Heart left ventricle (tissue), 16 donors: ENCODE measurements at regions of chr5 and their contacts with region 1.

Region 1: DNA sequence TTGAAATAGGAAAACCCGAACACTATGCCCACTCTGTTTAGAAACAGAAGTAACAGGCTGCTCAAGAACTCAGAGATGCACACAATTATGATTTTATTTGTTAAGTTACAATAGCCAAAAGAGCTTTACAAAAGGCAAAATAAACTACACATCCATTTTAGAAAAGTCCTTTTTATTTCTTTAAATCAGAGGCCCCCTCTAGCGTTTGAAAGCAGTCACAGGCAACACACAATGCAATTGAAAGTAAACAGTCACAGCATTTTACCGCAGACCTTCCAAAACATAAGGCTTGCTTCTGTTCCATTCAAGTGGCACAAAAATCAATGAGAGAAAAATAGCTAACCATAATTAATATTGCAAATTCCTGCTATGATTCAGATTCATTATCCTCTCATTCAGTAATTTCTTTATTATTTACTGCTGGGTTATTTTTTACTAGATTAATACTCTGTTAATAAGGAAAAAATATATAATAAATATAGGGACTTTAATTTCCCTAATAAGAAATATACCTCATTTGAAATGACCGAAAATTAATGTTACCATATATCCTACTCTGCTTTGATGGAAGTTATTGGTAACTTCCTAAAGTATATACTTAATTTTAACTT is 78.3 kb downstream of the CEP120 start:
- DNase-seq: no peak
- ATAC-seq: no peak
- H3K4me3 ChIP-seq: no peak overlapping the region
- H3K27ac ChIP-seq: no peak overlapping the region
- H3K4me1 ChIP-seq: no peaks in the 10 kb centered on the region
- H3K27me3 ChIP-seq: no peaks in the 10 kb centered on the region
- CTCF ChIP-seq: peak; percentile 36 to 73 (median 64)
- POLR2A ChIP-seq: no peak

Region 2: DNA sequence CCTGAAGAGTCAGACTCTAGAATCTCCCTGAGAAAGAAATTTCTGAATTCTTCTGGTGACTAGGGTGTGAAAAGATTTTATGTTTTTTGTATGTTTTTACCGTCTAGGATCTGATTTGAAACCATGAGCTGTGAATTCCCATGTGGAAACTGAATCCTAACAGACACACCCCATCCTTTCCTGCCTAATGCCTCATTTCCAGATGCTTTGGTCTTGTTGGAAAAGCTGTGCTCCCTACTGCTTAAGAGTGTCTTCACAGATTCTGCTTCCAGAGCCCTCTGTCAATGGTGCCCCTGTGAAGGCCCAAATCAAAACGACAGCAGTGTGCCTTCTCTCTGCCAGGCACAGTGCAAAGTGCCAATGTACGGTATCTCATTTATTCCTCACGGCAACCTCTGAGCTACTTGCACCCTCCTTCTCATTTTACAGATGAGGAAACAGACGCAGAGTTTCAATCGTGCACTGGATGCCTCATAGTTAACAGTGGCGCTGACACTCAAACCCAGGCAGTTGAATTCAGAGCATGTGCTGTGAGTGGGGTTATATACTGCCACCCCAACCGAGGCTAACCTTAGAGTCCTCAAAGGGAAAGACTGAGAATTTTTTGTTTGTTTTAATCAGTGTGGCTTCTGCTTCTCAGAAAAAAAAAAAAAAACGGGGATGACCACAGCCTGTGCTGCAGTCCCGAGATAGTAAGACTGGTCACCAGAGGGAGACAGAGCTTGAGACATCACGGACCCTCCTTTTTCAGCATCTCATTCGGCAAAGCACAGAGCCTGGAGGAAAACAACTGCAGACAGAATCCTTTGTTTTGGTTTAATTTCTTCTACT is 844.5 kb before region 1 on chr5:
- intact Hi-C with region 1: loop called in 4 of 10 experiments (anchors 5 to 10 kb)
- DNase-seq: peak in 2 of 5 donors; percentile 27 to 33
- ATAC-seq: peak; percentile 35 to 81 (median 70)
- H3K4me3 ChIP-seq: peak overlapping the region in 2 of 12 donors; percentile 19
- H3K27ac ChIP-seq: peak overlapping the region in 6 of 12 donors; percentile 0 to 63 (median 42)
- H3K4me1 ChIP-seq: peaks cover 0 to 12% (median 0%) of the 10 kb centered on the region in 12 donors
- H3K27me3 ChIP-seq: no peaks in the 10 kb centered on the region
- CTCF ChIP-seq: peak; percentile 23 to 62 (median 42)
- POLR2A ChIP-seq: no peak

Region 3: DNA sequence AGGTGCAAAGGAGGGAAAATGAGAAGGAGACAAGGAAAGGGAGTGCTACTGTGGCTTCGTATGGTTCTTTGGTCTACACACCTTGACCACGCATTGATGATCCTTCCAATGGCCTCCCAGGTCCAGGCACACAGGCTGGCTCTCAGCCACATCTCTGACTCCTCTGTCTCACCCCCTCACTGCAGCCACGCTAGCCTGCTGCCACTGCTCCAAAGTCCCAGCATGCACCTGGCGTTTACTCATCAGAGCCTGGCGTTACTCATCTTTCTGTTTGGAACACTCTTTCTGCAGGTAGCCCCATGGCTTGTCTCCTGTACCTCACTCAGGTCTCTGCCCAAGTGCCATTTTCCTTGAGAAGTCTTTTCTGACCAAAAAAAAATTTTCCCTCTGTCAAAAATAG is 837.3 kb before region 1 on chr5:
- intact Hi-C with region 1: loop called in 5 of 10 experiments (anchors 5 to 10 kb)
- DNase-seq: no peak
- ATAC-seq: no peak
- H3K4me3 ChIP-seq: no peak overlapping the region
- H3K27ac ChIP-seq: no peak overlapping the region
- H3K4me1 ChIP-seq: peaks cover 0 to 3% (median 0%) of the 10 kb centered on the region in 12 donors
- H3K27me3 ChIP-seq: no peaks in the 10 kb centered on the region
- CTCF ChIP-seq: no peak
- POLR2A ChIP-seq: no peak

Region 4: DNA sequence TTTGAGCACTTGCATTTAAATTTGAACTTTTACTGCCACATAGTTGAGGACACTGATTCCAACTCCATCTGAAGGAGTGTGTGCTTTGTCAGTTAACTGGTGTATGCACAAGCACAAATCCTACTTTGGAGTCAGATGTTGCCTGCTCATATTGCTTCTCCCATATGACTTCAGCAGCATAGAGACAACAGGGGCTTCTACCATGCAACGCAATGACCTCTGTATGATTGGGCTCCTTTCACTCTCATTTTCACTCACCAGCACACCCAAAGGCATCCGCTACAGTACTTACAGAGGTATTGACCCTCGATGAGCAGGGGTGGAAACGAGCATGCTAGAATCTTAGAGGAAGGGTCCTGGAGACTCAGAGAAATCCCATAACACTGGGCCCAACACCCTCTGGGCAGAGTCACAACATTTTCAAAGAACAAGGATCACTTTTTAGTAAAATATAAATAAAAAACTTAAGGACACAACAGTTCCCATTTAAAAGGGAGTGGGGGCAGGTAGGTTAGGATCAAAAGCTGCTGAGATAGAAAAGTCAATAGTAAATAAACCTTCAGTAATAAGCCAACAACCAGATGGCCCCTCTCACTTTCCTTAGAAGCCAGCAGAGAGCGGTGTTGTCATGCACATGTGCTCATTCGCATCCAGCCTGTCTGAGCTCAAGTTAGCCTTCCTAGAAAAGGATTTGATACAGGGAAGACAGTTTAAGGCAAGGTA is 829.1 kb before region 1 on chr5:
- intact Hi-C with region 1: loop called in 1 of 10 experiments (anchors 10 kb)
- DNase-seq: peak in 3 of 5 donors; percentile 18 to 31 (median 30)
- ATAC-seq: peak in 3 of 4 donors; percentile 79 to 83 (median 82)
- H3K4me3 ChIP-seq: no peak overlapping the region
- H3K27ac ChIP-seq: no peak overlapping the region
- H3K4me1 ChIP-seq: no peaks in the 10 kb centered on the region
- H3K27me3 ChIP-seq: peaks cover 0 to 3% (median 0%) of the 10 kb centered on the region in 9 donors
- CTCF ChIP-seq: peak; percentile 27 to 70 (median 56)
- POLR2A ChIP-seq: no peak

Region 5: GRCh38 chr5:122532035-122532434 is 812.9 kb before region 1 on chr5:
- intact Hi-C with region 1: loop called in 1 of 10 experiments (anchors 10 kb)
- DNase-seq: no peak
- ATAC-seq: no peak
- H3K4me3 ChIP-seq: no peak overlapping the region
- H3K27ac ChIP-seq: no peak overlapping the region
- H3K4me1 ChIP-seq: peaks cover 0 to 5% (median 0%) of the 10 kb centered on the region in 12 donors
- H3K27me3 ChIP-seq: peaks cover 0 to 36% (median 2%) of the 10 kb centered on the region in 9 donors
- CTCF ChIP-seq: no peak
- POLR2A ChIP-seq: no peak

Region 6: DNA sequence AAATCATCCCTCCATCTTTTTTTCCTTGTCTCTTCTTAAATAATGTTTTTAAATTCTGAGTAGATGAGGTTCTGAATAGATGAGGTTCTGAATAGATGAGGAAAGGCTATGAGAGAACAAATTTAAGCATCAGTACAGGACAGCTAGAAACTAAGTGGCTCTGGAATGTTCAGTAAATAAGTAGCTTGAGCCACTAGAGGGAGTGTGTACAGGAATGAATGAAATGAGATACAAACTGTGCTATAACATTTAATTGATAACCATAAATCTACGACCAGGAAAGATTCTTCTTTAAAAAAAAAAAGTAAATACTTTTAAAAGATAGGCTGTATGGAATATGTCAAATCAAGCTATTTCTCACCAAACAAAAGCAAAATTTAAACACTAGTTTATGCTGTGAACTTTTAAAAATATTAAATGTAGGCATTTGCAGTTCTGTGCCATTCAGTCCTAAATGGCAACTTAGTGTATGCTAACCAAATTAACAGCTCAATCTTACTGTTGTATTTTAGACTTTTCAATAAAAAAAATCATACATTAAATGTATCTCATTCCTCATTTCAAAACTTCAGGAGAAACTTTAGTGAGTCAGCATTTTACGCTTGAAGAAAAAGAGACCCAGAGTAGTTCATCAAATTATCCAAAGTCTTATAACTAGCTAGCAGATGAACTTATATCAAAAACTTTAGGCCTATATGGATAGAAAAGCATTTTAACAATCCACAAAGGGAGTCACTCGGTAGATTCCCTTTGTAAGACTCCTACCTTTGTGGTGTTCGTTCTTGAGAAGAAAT is 640.5 kb before region 1 on chr5:
- intact Hi-C with region 1: loop called in 1 of 10 experiments (anchors 10 kb)
- DNase-seq: no peak
- ATAC-seq: peak in 3 of 4 donors; percentile 50 to 67 (median 56)
- H3K4me3 ChIP-seq: no peak overlapping the region
- H3K27ac ChIP-seq: no peak overlapping the region
- H3K4me1 ChIP-seq: no peaks in the 10 kb centered on the region
- H3K27me3 ChIP-seq: no peaks in the 10 kb centered on the region
- CTCF ChIP-seq: peak; percentile 28 to 69 (median 57)
- POLR2A ChIP-seq: no peak

Region 7: GRCh38 chr5:122907238-122907637 is 437.7 kb before region 1 on chr5:
- intact Hi-C with region 1: loop called in 1 of 10 experiments (anchors 10 kb)
- DNase-seq: no peak
- ATAC-seq: peak in 1 of 4 donors; percentile 80
- H3K4me3 ChIP-seq: no peak overlapping the region
- H3K27ac ChIP-seq: no peak overlapping the region
- H3K4me1 ChIP-seq: peaks cover 0 to 20% (median 6%) of the 10 kb centered on the region in 12 donors
- H3K27me3 ChIP-seq: no peaks in the 10 kb centered on the region
- CTCF ChIP-seq: no peak
- POLR2A ChIP-seq: no peak

Region 8: GRCh38 chr5:123916331-123917121 is 571.6 kb after region 1 on chr5:
- intact Hi-C with region 1: no loop called
- DNase-seq: no peak
- ATAC-seq: peak; percentile 87 to 96 (median 92)
- H3K4me3 ChIP-seq: peak overlapping the region in 5 of 12 donors; percentile 3 to 20 (median 13)
- H3K27ac ChIP-seq: peak overlapping the region in 10 of 12 donors; percentile 35 to 86 (median 58)
- H3K4me1 ChIP-seq: peaks cover 0 to 15% (median 0%) of the 10 kb centered on the region in 12 donors
- H3K27me3 ChIP-seq: no peaks in the 10 kb centered on the region
- CTCF ChIP-seq: no peak
- POLR2A ChIP-seq: no peak